Stomach (tissue), 19 donors: ENCODE measurements at regions of chr3 and their contacts with region 1.

Region 1: GRCh38 chr3:186815435-186815834 is 9.2 kb upstream of the RFC4 start:
- DNase-seq: no peak
- H3K4me3 ChIP-seq: no peak overlapping the region
- H3K27ac ChIP-seq: no peak overlapping the region
- H3K4me1 ChIP-seq: no peaks in the 10 kb centered on the region
- H3K27me3 ChIP-seq: peaks cover 0 to 21% (median 0%) of the 10 kb centered on the region in 3 donors
- CTCF ChIP-seq: no peak
- EP300 ChIP-seq: no peak
- POLR2A ChIP-seq: no peak

Region 2: DNA sequence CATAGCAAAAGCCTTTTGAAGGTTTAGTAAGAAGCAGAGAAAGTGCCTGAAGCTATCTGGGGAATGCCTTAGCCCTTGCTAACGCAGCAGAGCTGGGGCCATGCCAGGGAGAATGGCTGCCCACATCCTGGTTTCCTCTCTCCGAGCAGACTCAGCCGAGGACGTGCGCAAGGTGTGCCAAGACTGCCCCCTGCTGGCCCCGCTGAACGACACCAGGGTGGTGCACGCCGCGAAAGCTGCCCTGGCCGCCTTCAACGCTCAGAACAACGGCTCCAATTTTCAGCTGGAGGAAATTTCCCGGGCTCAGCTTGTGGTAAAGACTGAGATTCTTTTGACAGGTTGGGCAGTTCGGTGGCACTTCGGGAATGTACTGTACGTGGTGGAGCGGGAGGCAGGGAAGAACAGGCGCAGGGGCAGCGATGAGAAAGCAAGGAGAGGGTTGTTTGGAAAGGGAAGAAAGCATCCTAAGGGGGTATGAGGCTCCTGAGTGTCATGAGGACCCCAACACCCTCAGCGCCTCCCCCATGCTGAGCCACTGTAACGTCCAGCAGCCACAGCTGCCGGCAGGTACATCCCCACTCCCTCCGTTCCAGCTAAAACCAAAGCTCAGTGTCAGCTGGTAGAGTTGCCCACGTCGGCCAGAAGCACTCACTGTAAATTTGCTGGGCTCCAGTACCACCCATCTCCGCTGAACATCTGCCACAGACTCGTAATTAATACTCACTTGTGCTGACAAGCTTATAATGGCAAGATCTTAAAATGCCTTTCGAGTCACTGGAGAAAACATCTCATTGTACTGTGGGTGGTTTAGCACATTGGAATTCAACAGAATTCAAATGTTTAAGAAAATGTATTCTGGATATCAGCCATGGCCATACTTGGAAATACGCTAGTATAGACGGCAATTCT is 198.1 kb before region 1 on chr3:
- intact Hi-C with region 1: loop called (anchors 5 kb)
- DNase-seq: peak; percentile 91 to 96
- H3K4me3 ChIP-seq: peak overlapping the region in 3 of 4 donors; percentile 1 to 17 (median 14)
- H3K27ac ChIP-seq: peak overlapping the region in 1 of 5 donors; percentile 25
- H3K4me1 ChIP-seq: peaks cover 4 to 19% (median 14%) of the 10 kb centered on the region in 4 donors
- H3K27me3 ChIP-seq: peaks cover 0 to 68% (median 13%) of the 10 kb centered on the region in 3 donors
- CTCF ChIP-seq: peak in 5 of 7 experiments; percentile 66 to 85 (median 77)
- EP300 ChIP-seq: no peak
- POLR2A ChIP-seq: no peak

Region 3: GRCh38 chr3:186953011-186953487 is 137.6 kb after region 1 on chr3:
- intact Hi-C with region 1: no loop called
- DNase-seq: no peak
- H3K4me3 ChIP-seq: no peak overlapping the region
- H3K27ac ChIP-seq: peak overlapping the region in 4 of 5 donors; percentile 15 to 54 (median 32)
- H3K4me1 ChIP-seq: peaks cover 1 to 46% (median 7%) of the 10 kb centered on the region in 4 donors
- H3K27me3 ChIP-seq: no peaks in the 10 kb centered on the region
- CTCF ChIP-seq: no peak
- EP300 ChIP-seq: no peak
- POLR2A ChIP-seq: no peak

Region 4: DNA sequence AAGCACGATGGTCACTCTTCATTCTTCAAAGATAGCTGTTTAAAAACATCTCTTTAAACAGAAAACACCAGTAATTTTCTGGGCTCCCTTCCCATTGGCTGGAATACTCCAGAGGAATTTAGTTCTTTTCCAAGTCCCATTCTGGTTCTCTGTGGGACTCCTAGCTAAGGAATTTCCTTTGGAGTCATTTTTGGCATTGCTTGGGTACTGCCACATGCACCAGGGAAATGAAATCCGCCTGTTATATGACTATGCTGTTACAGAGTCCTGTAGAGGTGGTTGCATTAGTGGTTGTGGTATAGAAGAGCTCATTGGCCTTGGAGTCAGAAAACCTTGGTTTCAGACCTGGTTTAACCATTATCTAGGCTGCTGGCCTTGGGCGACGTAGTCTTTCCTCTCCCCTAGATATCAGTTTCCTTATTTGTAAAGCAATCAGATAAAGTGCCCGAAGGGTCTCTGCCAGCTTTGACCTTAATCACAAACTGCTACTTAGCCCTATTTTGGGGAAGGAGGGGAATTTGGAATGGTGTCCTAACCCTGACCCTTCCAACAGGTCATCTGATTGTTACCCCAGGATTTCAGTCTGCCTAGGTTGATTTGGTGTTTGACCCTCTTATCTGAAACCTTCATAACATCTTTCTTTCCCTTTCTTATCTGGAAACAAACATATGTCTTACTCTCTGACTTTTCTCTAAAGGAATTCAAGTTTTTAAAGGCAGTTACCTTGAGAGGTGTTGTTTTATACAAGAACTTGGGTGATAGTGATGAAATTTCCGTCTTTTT is 395.3 kb after region 1 on chr3:
- intact Hi-C with region 1: no loop called
- DNase-seq: peak in 1 of 2 donors; percentile 20
- H3K4me3 ChIP-seq: no peak overlapping the region
- H3K27ac ChIP-seq: peak overlapping the region in 1 of 5 donors; percentile 8
- H3K4me1 ChIP-seq: peaks cover 12 to 48% (median 18%) of the 10 kb centered on the region in 4 donors
- H3K27me3 ChIP-seq: no peaks in the 10 kb centered on the region
- CTCF ChIP-seq: no peak
- EP300 ChIP-seq: no peak
- POLR2A ChIP-seq: no peak